HEK293 (cell line): ENCODE measurements at regions of chr4 and their contacts with region 1.

Region 1: DNA sequence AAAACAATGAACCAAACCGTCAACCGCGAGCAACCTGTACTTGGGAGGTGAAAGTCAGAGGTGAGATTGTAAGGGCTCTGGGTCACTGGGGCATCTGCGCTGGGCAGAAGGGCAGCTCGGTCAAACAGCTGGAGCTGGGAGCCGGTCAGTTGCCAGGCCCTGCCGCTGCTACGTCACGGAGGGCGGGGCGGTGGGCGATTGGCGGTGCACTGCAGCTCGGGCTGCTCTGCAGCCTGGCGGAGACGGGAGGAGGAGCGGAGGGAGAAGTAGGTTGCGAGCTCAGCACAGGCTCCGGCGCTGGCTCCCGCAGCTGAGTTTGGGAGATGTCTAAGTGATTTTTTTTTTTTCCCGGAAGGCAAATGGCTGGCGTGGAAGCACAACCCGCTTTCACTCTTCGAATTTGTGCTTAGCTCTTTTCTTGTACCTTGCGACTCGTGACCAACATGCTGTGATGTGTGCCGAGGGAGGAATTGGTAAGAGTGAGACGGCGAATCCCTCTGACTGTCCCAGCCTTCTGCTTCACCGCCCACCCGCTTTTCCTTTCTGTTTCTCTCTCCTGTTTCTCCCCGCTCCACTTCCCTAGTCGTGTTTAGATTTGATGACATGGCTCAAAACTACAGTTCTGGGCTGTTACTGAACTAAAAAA is at the start of gene ATP10D:
- H3K4me3 ChIP-seq: peak within 1 kb of the TSS; percentile 56
- H3K27ac ChIP-seq: peak within 1 kb of the TSS; percentile 45; the same call in 1 of the 2 replicates
- H3K4me1 ChIP-seq: no peaks in the 10 kb centered on the region
- CTCF ChIP-seq: no peak

Region 2: GRCh38 chr4:47463235-47463956 is 21.8 kb before region 1 on chr4 and contains the start of gene COMMD8:
- CTCF ChIA-PET with region 1: interaction called, 5 read pairs
- POLR2A ChIA-PET with region 1: interaction called, 12 read pairs
- H3K4me3 ChIP-seq: peak within 1 kb of the TSS; percentile 72
- H3K27ac ChIP-seq: peak within 1 kb of the TSS; percentile 28; the same call in 1 of the 2 replicates
- H3K4me1 ChIP-seq: no peaks in the 10 kb centered on the region
- CTCF ChIP-seq: peak; percentile 79